Activated CD4-positive, alpha-beta T cell treated with anti-CD3 and anti-CD28 coated beads, Interleukin-2, amount 10 ng/mL, durations not matched to agents 24 days and 14 days (primary cell): ENCODE measurements at regions of chr11 and their contacts with region 1.

Region 1: DNA sequence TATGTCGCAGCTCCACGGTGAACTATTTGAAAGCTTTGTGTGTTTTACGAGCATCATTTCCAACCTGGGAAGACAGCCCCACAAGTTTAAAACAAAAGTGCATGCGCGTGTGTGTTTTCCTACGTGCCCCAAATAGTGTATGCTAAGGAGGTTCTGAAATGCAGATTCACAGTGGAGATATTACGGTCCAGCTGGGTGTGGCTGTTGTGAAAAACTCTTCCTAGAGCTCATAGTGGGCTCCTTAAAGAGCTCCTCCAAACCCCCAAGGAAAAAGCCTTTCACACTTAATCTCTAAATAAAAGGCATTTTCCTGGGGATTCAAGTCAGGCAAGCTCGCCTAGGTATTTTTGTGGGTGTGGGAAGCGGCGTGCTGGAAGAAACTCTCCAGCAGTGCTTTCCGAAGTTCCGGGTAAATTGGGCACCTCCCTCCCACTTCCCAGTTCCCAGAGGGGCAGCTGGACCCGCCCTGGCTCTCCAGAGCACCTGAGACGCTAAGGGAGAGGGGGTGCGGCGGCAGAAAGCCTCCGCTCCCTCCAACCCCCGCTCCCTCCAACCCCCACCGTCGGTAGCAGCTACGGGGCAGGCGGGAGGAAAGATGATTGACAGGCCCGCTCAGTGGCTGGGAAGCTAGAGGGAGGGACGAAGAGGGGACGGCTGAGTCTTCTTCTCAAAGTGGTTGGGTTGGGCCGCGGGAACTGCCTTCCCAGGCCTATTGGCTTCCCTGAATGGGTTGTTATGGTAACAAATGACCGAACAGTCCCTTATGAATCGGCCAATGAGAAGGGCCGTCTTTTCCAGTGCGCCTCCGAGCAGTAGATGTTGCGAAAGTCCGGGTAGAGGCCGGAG is 558 bp upstream of the PCF11 start:
- DNase-seq: no peak
- H3K4me3 Mint-ChIP-seq: peak overlapping the region; percentile 100
- H3K27ac Mint-ChIP-seq: peak overlapping the region; percentile 100
- H3K4me1 Mint-ChIP-seq: peaks cover 28% of the 10 kb centered on the region
- H3K27me3 Mint-ChIP-seq: no peaks in the 10 kb centered on the region

Region 2: DNA sequence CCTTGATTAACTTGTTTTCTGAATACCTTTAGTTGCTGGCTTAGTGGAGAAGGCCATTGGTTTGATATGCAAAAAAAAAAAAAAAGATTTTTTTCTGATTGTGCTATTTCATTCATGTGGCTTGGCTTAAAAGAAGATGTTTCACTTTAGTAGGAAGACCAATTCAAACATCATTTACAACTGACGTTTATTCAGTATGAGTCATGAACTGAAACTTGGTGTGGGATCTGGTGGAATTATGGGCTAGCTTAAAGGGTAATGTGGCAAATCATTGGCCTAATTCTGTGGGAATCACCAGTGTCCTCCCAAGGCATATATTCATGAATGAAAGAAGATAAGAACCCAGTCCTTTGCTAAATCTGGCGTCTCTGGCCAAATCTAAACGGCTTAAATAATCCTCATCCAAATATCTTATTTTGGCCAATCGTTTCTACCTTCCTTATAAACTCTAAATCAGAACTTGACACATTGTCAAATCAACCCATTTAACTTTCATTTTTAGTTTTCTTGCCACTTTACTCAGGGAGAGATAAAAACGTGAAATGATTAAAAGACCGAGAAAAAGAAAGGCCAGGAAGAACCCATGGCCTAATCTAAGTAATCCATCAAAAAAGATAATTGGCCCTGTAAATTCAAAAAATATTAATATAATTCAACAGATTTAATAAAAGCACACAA is 177.8 kb before region 1 on chr11:
- intact Hi-C with region 1: loop called (anchors 2 kb)
- DNase-seq: peak; percentile 66
- H3K4me3 Mint-ChIP-seq: peak overlapping the region; percentile 30
- H3K27ac Mint-ChIP-seq: peak overlapping the region; percentile 25
- H3K4me1 Mint-ChIP-seq: peaks cover 27% of the 10 kb centered on the region
- H3K27me3 Mint-ChIP-seq: peaks cover 7% of the 10 kb centered on the region

Region 3: GRCh38 chr11:83071567-83072349 is 84.6 kb before region 1 on chr11 and contains the start of gene RAB30:
- intact Hi-C with region 1: loop called (anchors 1 kb)
- DNase-seq: peak; percentile 98
- H3K4me3 Mint-ChIP-seq: no peak within 1 kb of the TSS
- H3K27ac Mint-ChIP-seq: no peak within 1 kb of the TSS
- H3K4me1 Mint-ChIP-seq: peaks cover 32% of the 10 kb centered on the region
- H3K27me3 Mint-ChIP-seq: no peaks in the 10 kb centered on the region
- total RNA-seq, gene RAB30: 13.6 and 15.4 TPM in 2 replicates

Region 4: GRCh38 chr11:83174008-83174407 is 17.6 kb after region 1 on chr11:
- intact Hi-C with region 1: loop called (anchors 2 kb)
- DNase-seq: no peak
- H3K4me3 Mint-ChIP-seq: peak overlapping the region; percentile 12
- H3K27ac Mint-ChIP-seq: peak overlapping the region; percentile 52
- H3K4me1 Mint-ChIP-seq: peaks cover 46% of the 10 kb centered on the region
- H3K27me3 Mint-ChIP-seq: no peaks in the 10 kb centered on the region

Region 5: GRCh38 chr11:83285771-83286528 is 129.6 kb after region 1 on chr11 and contains the start of gene CCDC90B:
- intact Hi-C with region 1: loop called (anchors 1 kb)
- DNase-seq: peak; percentile 97
- H3K4me3 Mint-ChIP-seq: peak within 1 kb of the TSS; percentile 99
- H3K27ac Mint-ChIP-seq: peak within 1 kb of the TSS; percentile 99
- H3K4me1 Mint-ChIP-seq: peaks cover 20% of the 10 kb centered on the region
- H3K27me3 Mint-ChIP-seq: peaks cover 11% of the 10 kb centered on the region
- total RNA-seq, gene CCDC90B: 24.1 and 24.7 TPM in 2 replicates